Ascending aorta (tissue), 2 donors: ENCODE measurements at regions of chr7 and their contacts with region 1.

Region 1: DNA sequence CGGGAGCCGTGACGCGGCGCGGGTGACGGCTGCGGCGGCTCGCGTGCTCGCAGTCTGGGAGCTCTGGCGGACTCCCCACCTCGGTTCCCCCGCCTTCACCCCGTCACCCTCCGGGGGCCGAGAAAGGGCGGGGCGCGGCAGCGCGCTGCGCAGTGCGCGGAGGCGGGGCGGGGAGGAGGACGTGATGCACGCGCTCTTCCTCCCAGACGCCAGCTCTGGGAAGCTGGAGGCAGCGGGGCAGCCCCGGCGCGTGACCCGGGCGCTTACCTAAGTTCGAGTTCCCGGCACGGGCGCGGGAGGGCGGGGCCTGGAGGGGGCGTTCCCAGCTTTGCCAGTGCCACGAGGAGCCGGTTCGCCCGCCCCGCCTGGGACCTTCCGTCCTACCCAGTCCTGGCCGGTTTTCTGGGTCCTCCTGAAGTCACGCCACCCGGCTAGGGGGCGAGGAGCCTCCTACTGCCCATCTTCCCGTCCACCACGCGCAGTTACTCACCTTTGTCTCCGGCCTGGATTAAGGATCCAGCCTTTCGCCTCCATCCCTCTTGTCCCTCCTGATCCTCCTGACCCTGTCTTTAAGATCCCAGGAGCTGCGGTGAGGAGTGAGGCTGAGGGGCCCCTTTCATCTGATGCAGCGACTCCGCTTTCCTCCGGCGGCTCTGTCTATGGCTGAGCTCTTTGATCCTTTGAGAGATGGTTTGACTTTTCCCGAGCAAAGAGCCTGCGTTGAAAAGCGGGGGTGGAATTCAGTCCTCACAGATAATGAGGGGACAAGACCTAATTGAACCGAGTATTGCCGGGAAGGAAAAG is 470 bp upstream of the NAMPT start:
- DNase-seq: peak; percentile 97 to 99
- H3K4me3 ChIP-seq: peak overlapping the region; percentile 79 to 97
- H3K27ac ChIP-seq: peak overlapping the region; percentile 95 to 99
- H3K4me1 ChIP-seq: peaks cover 0 to 3% of the 10 kb centered on the region in 2 donors
- H3K27me3 ChIP-seq: no peaks in the 10 kb centered on the region
- CTCF ChIP-seq: no peak

Region 2: GRCh38 chr7:104983578-104984539 is 1301.4 kb before region 1 on chr7:
- intact Hi-C with region 1: loop called (anchors 10 kb)
- DNase-seq: peak; percentile 57 to 95
- H3K4me3 ChIP-seq: peak overlapping the region; percentile 65 to 69
- H3K27ac ChIP-seq: peak overlapping the region; percentile 91 to 98
- H3K4me1 ChIP-seq: peaks cover 6 to 43% of the 10 kb centered on the region in 2 donors
- H3K27me3 ChIP-seq: no peaks in the 10 kb centered on the region
- CTCF ChIP-seq: peak; percentile 57 to 64 (median 62)

Region 3: GRCh38 chr7:106009403-106010226 is 275.6 kb before region 1 on chr7:
- intact Hi-C with region 1: no loop called
- DNase-seq: peak; percentile 54 to 85
- H3K4me3 ChIP-seq: peak overlapping the region in 1 of 2 donors; percentile 40
- H3K27ac ChIP-seq: no peak overlapping the region
- H3K4me1 ChIP-seq: no peaks in the 10 kb centered on the region
- H3K27me3 ChIP-seq: no peaks in the 10 kb centered on the region
- CTCF ChIP-seq: peak; percentile 83 to 98 (median 86)

Region 4: DNA sequence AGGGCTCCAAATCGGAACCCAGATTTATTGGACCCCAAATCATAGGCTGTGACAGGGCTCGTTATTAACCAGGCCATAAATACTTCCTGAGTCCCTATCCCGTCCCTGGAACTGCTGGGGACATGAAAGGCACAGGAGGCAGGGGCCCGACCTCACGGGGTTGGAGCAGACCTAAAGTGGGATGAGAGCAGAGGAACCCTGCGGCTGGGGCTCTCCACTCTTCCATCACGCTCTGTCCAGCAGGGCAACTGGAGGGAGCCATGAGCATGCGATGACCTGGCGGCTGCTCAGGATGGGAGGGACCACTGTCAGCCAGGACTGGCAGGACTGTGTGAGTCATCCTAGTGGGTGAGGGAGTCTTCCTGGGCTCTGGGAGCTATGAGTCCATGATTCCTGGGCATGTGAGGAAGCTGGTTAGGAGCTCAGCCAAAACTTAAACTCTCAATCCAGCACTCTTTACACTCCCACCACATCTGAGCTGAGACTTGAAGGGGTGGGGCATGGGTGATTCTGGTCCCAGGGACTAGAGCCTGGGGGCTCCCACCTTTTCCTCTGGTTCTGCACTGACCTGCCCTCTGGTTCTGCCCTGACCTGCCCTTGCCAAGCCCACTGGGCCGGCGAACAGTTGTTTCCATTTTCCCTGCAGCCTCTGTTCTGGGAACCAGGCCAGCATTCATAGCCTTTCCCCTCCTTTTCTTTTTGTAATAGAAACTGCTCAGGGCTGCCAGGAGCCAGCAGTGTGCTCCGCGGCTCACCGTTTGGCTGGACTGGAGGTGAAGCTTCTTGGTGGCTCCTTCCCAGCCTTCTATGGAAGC is 220.3 kb before region 1 on chr7:
- intact Hi-C with region 1: loop called (anchors 10 kb)
- DNase-seq: peak; percentile 82 to 93
- H3K4me3 ChIP-seq: peak overlapping the region; percentile 37 to 50
- H3K27ac ChIP-seq: peak overlapping the region; percentile 68 to 75
- H3K4me1 ChIP-seq: peaks cover 7 to 9% of the 10 kb centered on the region in 2 donors
- H3K27me3 ChIP-seq: no peaks in the 10 kb centered on the region
- CTCF ChIP-seq: no peak

Region 5: DNA sequence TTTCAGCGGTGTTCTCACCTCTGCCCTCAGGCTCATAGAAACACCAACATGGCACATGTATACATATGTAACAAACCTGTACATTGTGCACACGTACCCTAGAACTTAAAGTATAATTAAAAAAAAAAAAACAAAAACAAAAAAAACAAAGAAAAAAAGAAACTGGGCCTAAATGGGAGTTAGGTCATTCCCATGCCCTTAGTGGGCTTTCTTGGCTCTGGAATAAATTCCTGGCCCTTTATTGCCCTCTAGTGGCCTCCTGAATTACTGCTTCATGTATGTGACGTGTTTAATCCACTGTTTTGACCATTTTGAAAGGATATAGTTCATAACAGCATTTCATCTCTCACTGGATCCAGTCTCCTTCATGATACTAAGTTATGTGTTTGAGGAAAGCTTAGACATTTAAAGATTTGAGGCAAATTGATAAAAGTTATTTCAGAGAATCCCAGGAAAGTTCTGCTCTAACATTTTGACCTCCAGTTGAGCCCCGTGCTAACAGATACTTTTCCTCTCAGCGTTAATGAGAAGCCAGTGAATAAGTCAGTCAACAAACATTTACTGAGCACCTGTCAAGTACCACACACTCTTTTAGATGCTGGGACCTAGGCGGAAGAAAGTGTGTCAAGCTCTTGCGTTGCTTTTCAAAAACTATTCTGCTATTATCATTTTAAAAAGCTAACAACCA is 118.5 kb before region 1 on chr7:
- intact Hi-C with region 1: loop called (anchors 2 kb)
- DNase-seq: peak in 1 of 2 donors; percentile 74
- H3K4me3 ChIP-seq: no peak overlapping the region
- H3K27ac ChIP-seq: peak overlapping the region in 1 of 2 donors; percentile 25
- H3K4me1 ChIP-seq: peaks cover 0 to 6% of the 10 kb centered on the region in 2 donors
- H3K27me3 ChIP-seq: no peaks in the 10 kb centered on the region
- CTCF ChIP-seq: peak; percentile 50 to 77 (median 75)

Region 6: GRCh38 chr7:106216517-106216922 is 68.7 kb before region 1 on chr7:
- intact Hi-C with region 1: loop called (anchors 1 kb)
- DNase-seq: peak in 1 of 2 donors; percentile 87
- H3K4me3 ChIP-seq: peak overlapping the region in 1 of 2 donors; percentile 16
- H3K27ac ChIP-seq: peak overlapping the region; percentile 78 to 79
- H3K4me1 ChIP-seq: peaks cover 0 to 16% of the 10 kb centered on the region in 2 donors
- H3K27me3 ChIP-seq: no peaks in the 10 kb centered on the region
- CTCF ChIP-seq: no peak

Region 7: GRCh38 chr7:106425017-106425719 is 139.9 kb after region 1 on chr7:
- intact Hi-C with region 1: loop called (anchors 2 kb)
- DNase-seq: peak; percentile 33 to 92
- H3K4me3 ChIP-seq: no peak overlapping the region
- H3K27ac ChIP-seq: peak overlapping the region; percentile 47 to 59
- H3K4me1 ChIP-seq: peaks cover 0 to 12% of the 10 kb centered on the region in 2 donors
- H3K27me3 ChIP-seq: no peaks in the 10 kb centered on the region
- CTCF ChIP-seq: no peak

Region 8: GRCh38 chr7:107168233-107169119 is 883.2 kb after region 1 on chr7 and contains the start of gene HBP1:
- intact Hi-C with region 1: loop called (anchors 5 kb)
- DNase-seq: peak; percentile 100
- H3K4me3 ChIP-seq: peak within 1 kb of the TSS; percentile 81 to 94
- H3K27ac ChIP-seq: peak within 1 kb of the TSS; percentile 94 to 100
- H3K4me1 ChIP-seq: peaks cover 2 to 23% of the 10 kb centered on the region in 2 donors
- H3K27me3 ChIP-seq: no peaks in the 10 kb centered on the region
- CTCF ChIP-seq: no peak
- total RNA-seq, gene HBP1: 62.2 TPM